Spleen (tissue), 13 donors: ENCODE measurements at regions of chr6 and their contacts with region 1.

Region 1: DNA sequence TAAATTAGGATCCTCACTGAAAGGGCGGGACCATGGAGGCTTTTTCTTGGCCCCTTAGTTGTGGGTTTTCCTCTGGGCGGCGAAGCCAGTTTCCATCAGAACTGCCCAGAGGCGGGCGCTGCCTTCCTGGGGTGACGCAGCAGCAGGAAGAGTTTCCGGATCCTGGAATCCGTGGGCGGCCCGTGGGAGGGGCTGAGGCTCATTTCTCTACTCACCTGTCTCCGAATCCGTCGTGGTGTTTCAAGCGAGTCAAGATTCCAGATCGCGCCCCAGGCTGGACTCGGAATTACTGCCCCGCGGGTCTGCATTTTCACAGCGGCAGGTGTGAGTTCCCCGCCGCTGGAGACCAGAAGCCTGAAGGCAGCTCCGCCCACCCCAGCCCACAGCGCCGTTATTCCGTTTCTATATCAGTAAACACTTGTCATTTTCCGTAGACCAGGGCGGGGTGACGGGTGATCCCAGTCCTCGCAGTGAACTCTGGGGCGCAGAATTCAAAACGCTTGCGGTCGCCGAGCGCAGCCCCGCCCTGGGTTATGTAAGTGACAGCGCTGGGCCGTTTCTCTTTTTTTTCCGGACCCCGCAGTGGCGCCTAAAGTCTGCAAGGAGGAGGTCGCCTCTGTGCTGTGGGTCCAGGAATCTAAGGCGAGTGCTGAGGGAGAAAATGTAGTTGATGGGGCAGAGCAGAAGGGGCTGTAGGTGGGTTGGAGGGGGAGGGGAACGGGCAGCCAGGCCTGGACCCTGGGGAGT is 27.2 kb upstream of the POU5F1 start:
- DNase-seq: peak; percentile 98
- H3K4me3 ChIP-seq: peak overlapping the region; percentile 39 to 81 (median 56)
- H3K27ac ChIP-seq: peak overlapping the region; percentile 93 to 100 (median 99)
- H3K4me1 ChIP-seq: peaks cover 6 to 77% (median 52%) of the 10 kb centered on the region in 6 donors
- H3K27me3 ChIP-seq: no peaks in the 10 kb centered on the region
- CTCF ChIP-seq: peak in 2 of 11 experiments; percentile 18 to 19
- POLR2A ChIP-seq: peak; percentile 41 to 65 (median 50)

Region 2: GRCh38 chr6:30914076-30914853 is 283.5 kb before region 1 on chr6 and contains the start of gene VARS2:
- intact Hi-C with region 1: no loop called
- DNase-seq: peak; percentile 96
- H3K4me3 ChIP-seq: peak within 1 kb of the TSS; percentile 48 to 91 (median 76)
- H3K27ac ChIP-seq: peak within 1 kb of the TSS; percentile 67 to 91 (median 88)
- H3K4me1 ChIP-seq: peaks cover 18 to 56% (median 31%) of the 10 kb centered on the region in 6 donors
- H3K27me3 ChIP-seq: no peaks in the 10 kb centered on the region
- CTCF ChIP-seq: peak in 9 of 11 experiments; percentile 28 to 68 (median 53)
- POLR2A ChIP-seq: peak; percentile 6 to 78 (median 42)
- total RNA-seq, gene VARS2: 16.4 to 30.7 (median 28.1) TPM

Region 3: GRCh38 chr6:31107052-31107451 is 90.7 kb before region 1 on chr6:
- intact Hi-C with region 1: no loop called
- DNase-seq: no peak
- H3K4me3 ChIP-seq: no peak overlapping the region
- H3K27ac ChIP-seq: no peak overlapping the region
- H3K4me1 ChIP-seq: no peaks in the 10 kb centered on the region
- H3K27me3 ChIP-seq: peaks cover 0 to 32% (median 0%) of the 10 kb centered on the region in 7 donors
- CTCF ChIP-seq: no peak
- POLR2A ChIP-seq: no peak

Region 4: DNA sequence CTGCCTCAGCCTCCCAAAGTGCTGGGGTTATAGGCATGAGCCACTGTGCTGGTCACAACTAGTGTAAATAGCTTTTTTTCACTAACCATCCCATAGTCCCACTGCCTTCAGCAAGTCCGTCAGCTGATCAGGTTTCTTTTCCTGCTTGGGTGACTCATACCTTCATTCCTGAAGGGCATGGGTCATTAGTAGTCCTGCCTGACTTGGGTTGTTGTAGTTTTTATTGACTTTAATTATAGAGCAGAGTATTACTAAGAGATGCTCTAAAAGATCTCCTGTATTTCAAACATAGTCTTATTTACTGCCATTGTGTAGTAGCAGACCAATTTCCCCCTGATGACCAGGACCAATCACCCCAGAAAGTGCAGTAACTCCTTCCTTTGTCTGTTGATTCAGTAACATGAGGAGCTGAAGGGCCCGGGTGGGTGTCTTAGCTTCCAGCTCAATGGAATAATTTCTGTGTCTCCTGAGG is 48.4 kb after region 1 on chr6:
- intact Hi-C with region 1: no loop called
- DNase-seq: no peak
- H3K4me3 ChIP-seq: no peak overlapping the region
- H3K27ac ChIP-seq: no peak overlapping the region
- H3K4me1 ChIP-seq: no peaks in the 10 kb centered on the region
- H3K27me3 ChIP-seq: peaks cover 0 to 10% (median 0%) of the 10 kb centered on the region in 7 donors
- CTCF ChIP-seq: no peak
- POLR2A ChIP-seq: no peak

Region 5: DNA sequence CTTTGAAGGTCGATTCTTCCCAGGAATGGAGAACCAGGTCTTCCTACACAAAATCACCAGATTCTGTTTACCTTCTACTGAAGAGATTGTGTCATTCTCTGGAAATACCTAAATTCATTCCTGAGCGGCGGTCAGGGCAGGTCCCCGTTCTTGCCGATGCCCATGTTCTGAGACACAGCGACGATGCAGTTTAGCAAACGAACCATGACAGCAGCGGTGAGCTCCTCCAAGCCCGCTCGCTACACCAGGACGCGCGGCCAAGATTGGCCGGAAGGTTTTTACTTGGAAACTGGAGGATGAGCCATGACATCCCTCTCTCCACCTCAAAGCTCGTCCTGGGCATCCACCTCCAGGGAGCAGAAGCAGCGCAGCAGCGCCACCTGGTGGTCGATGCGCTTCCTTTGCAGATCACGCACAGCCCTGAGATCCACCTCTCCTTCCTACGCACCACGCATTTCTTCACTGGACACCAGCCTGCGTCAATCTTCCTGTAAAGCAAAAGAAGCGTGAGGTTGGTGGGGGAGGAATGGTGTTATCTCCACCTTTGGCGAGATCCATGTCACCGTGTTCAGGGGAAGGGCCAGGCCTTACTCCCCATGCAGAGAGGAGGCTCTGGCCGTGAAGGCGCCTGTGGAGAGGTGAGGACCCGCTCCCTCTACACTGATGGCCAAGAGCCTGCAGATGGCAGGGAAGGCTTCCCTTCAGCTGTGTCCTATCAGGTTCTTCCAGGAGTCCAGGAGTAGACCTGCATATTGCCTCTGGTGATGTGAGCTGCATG is 169.2 kb after region 1 on chr6:
- intact Hi-C with region 1: loop called (anchors 5 kb)
- DNase-seq: peak; percentile 96
- H3K4me3 ChIP-seq: peak overlapping the region in 7 of 8 donors; percentile 21 to 66 (median 35)
- H3K27ac ChIP-seq: peak overlapping the region in 1 of 8 donors; percentile 18
- H3K4me1 ChIP-seq: peaks cover 0 to 13% (median 8%) of the 10 kb centered on the region in 6 donors
- H3K27me3 ChIP-seq: peaks cover 0 to 29% (median 0%) of the 10 kb centered on the region in 7 donors
- CTCF ChIP-seq: peak; percentile 89 to 98 (median 95)
- POLR2A ChIP-seq: no peak